ENCODE measurements at regions of chr3 and their contacts with region 1.

Region 1: GRCh38 chr3:188947401-188948280 is 224.1 kb upstream of the TPRG1 start:
- DNase-seq: peak; percentile 83 to 86
- H3K4me3 ChIP-seq: peak overlapping the region; percentile 46
- H3K4me3 Mint-ChIP-seq: peak overlapping the region; percentile 61
- H3K27ac Mint-ChIP-seq: peak overlapping the region; percentile 62
- H3K4me1 ChIP-seq: peaks cover 30% of the 10 kb centered on the region
- H3K4me1 Mint-ChIP-seq: peaks cover 19% of the 10 kb centered on the region
- H3K27me3 ChIP-seq: no peaks in the 10 kb centered on the region
- H3K27me3 Mint-ChIP-seq: no peaks in the 10 kb centered on the region
- CTCF ChIP-seq: peak; percentile 30 to 39

Region 2: GRCh38 chr3:187758318-187758955 is 1189.2 kb before region 1 on chr3:
- CTCF ChIA-PET with region 1: no interaction called
- POLR2A ChIA-PET with region 1: interaction called, 19 read pairs
- intact Hi-C with region 1: no loop called
- DNase-seq: no peak
- H3K4me3 ChIP-seq: no peak overlapping the region
- H3K4me3 Mint-ChIP-seq: no peak overlapping the region
- H3K27ac Mint-ChIP-seq: no peak overlapping the region
- H3K4me1 ChIP-seq: peaks cover 15% of the 10 kb centered on the region; the same call in 1 of the 2 replicates
- H3K4me1 Mint-ChIP-seq: peaks cover 31% of the 10 kb centered on the region
- H3K27me3 ChIP-seq: no peaks in the 10 kb centered on the region
- H3K27me3 Mint-ChIP-seq: no peaks in the 10 kb centered on the region
- CTCF ChIP-seq: no peak

Region 3: GRCh38 chr3:188827576-188827975 is 120.1 kb before region 1 on chr3:
- CTCF ChIA-PET with region 1: no interaction called
- POLR2A ChIA-PET with region 1: no interaction called
- intact Hi-C with region 1: no loop called
- DNase-seq: peak in 1 of 2 experiments; percentile 42
- H3K4me3 ChIP-seq: no peak overlapping the region
- H3K4me3 Mint-ChIP-seq: no peak overlapping the region
- H3K27ac Mint-ChIP-seq: no peak overlapping the region
- H3K4me1 ChIP-seq: peaks cover 8% of the 10 kb centered on the region; the same call in 1 of the 2 replicates
- H3K4me1 Mint-ChIP-seq: peaks cover 18% of the 10 kb centered on the region
- H3K27me3 ChIP-seq: no peaks in the 10 kb centered on the region
- H3K27me3 Mint-ChIP-seq: no peaks in the 10 kb centered on the region
- CTCF ChIP-seq: no peak

Region 4: GRCh38 chr3:188839187-188839695 is 108.4 kb before region 1 on chr3:
- CTCF ChIA-PET with region 1: no interaction called
- POLR2A ChIA-PET with region 1: no interaction called
- intact Hi-C with region 1: loop called (anchors 2 kb)
- DNase-seq: peak; percentile 86 to 90
- H3K4me3 ChIP-seq: no peak overlapping the region
- H3K4me3 Mint-ChIP-seq: no peak overlapping the region
- H3K27ac Mint-ChIP-seq: peak overlapping the region; percentile 75
- H3K4me1 ChIP-seq: peaks cover 12% of the 10 kb centered on the region
- H3K4me1 Mint-ChIP-seq: peaks cover 22% of the 10 kb centered on the region
- H3K27me3 ChIP-seq: no peaks in the 10 kb centered on the region
- H3K27me3 Mint-ChIP-seq: no peaks in the 10 kb centered on the region
- CTCF ChIP-seq: no peak

Region 5: GRCh38 chr3:188881954-188882641 is 65.5 kb before region 1 on chr3:
- CTCF ChIA-PET with region 1: no interaction called
- POLR2A ChIA-PET with region 1: no interaction called
- intact Hi-C with region 1: loop called (anchors 5 kb)
- DNase-seq: no peak
- H3K4me3 ChIP-seq: no peak overlapping the region
- H3K4me3 Mint-ChIP-seq: no peak overlapping the region
- H3K27ac Mint-ChIP-seq: peak overlapping the region; percentile 84
- H3K4me1 ChIP-seq: peaks cover 14% of the 10 kb centered on the region
- H3K4me1 Mint-ChIP-seq: peaks cover 14% of the 10 kb centered on the region
- H3K27me3 ChIP-seq: no peaks in the 10 kb centered on the region
- H3K27me3 Mint-ChIP-seq: no peaks in the 10 kb centered on the region
- CTCF ChIP-seq: no peak

Region 6: DNA sequence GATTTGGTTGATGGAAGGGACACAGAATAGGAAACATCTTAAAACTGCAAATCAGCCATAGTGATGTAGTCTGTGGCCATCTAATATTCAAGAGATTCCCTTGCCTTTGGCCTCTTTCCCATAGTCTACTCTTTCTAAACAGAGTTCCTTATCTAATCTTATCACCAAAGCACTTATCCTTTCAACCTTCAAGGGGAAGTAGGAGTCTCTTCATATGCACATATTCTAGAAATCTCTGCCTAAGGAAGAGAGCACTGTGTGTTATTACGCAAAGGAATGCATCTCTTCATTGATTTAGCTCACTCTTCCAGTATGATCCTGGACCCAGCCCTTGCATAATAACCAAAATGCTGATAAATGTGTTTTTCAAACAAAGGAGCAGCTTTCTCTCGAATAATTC is 29.6 kb before region 1 on chr3:
- CTCF ChIA-PET with region 1: interaction called, 4 read pairs
- POLR2A ChIA-PET with region 1: no interaction called
- intact Hi-C with region 1: loop called (anchors 1 kb)
- DNase-seq: peak; percentile 47 to 74
- H3K4me3 ChIP-seq: no peak overlapping the region
- H3K4me3 Mint-ChIP-seq: peak overlapping the region; percentile 46
- H3K27ac Mint-ChIP-seq: peak overlapping the region; percentile 62
- H3K4me1 ChIP-seq: peaks cover 37% of the 10 kb centered on the region
- H3K4me1 Mint-ChIP-seq: peaks cover 42% of the 10 kb centered on the region
- H3K27me3 ChIP-seq: no peaks in the 10 kb centered on the region
- H3K27me3 Mint-ChIP-seq: no peaks in the 10 kb centered on the region
- CTCF ChIP-seq: no peak

Measured in Caco-2 (cell line).